ENCODE measurements at regions of chr6 and their contacts with region 1.

Region 1: DNA sequence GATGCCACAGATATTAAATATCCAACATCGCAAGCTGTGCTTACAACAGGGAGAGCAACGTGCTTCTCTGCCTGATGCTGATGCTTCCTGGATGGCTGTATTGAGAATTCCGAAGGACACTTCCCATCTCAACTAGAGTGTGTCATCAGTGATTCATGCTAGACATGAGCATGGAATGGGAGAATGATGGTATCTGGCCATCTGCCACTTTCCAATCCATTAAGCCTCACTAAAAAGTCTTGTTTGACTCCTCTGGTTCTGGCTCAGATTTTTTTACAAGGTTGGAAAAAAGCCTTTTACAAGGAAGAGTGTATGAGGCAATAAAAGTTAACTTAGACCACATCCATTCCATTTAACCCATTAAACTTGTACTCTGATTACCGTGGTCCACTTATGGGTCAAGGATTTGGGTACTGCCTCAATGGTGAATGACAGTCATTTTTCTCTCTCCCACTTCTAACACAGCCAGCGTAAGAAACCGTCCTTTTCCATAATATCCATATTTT is 265.3 kb downstream of the UST start:
- DNase-seq: peak; percentile 98
- ATAC-seq: peak; percentile 97
- H3K4me3 ChIP-seq: no peak overlapping the region
- H3K27ac ChIP-seq: peak overlapping the region; percentile 87
- H3K4me1 ChIP-seq: peaks cover 41% of the 10 kb centered on the region
- H3K27me3 ChIP-seq: no peaks in the 10 kb centered on the region
- CTCF ChIP-seq: no peak

Region 2: DNA sequence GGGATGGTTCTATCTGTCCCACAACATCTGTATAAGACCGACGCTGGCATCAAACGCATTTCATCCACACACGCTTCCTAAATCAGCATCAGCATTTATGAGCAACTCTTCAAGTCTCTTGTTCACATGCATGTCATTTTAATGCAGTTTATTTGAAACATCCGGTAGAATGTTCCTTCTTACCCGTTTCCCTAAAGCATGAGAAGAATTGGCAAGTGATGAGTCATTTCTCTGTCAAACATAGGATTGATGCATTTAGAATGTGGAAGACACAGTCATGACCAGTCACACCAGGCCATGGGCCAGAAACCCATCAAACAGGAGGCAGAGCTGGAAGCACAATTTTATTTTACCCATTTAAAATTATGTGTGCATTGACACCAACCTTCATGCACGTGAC is 142.5 kb before region 1 on chr6:
- CTCF ChIA-PET with region 1: no interaction called
- POLR2A ChIA-PET with region 1: no interaction called
- intact Hi-C with region 1: loop called (anchors 2 kb)
- DNase-seq: peak; percentile 96
- ATAC-seq: peak; percentile 90
- H3K4me3 ChIP-seq: no peak overlapping the region
- H3K27ac ChIP-seq: peak overlapping the region; percentile 88
- H3K4me1 ChIP-seq: peaks cover 33% of the 10 kb centered on the region
- H3K27me3 ChIP-seq: no peaks in the 10 kb centered on the region
- CTCF ChIP-seq: no peak